Pancreas (tissue), 10 donors: ENCODE measurements at regions of chr11 and their contacts with region 1.

Region 1: GRCh38 chr11:12893787-12894672 is 115.1 kb upstream of the RASSF10 start:
- DNase-seq: peak; percentile 30 to 86 (median 72)
- ATAC-seq: peak; percentile 59 to 85 (median 80)
- H3K4me3 ChIP-seq: no peak overlapping the region
- H3K27ac ChIP-seq: peak overlapping the region in 2 of 4 donors; percentile 29 to 31
- H3K4me1 ChIP-seq: peaks cover 0 to 17% (median 3%) of the 10 kb centered on the region in 3 donors
- H3K27me3 ChIP-seq: no peaks in the 10 kb centered on the region
- CTCF ChIP-seq: peak; percentile 79 to 86 (median 82)

Region 2: DNA sequence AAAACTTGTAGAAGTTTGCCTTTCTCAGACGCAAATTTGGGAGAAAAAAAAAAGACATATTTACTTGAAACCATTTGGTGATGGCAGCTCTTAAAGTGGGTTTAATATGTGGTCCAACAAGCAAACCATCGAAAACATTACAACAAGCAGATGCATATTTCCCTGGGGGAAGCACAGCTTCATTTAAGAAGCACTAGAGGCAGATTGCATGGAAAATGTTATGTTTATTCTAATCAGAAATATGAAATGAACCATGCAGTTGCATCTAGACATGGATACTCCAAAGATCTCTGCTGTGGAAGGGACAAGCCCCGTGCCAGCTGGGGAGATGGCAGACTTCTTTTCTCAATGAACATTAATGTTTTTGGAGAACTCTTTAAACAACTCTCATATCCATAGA is 574.0 kb before region 1 on chr11:
- intact Hi-C with region 1: loop called in 2 of 3 experiments (anchors 5 to 10 kb)
- DNase-seq: no peak
- ATAC-seq: no peak
- H3K4me3 ChIP-seq: no peak overlapping the region
- H3K27ac ChIP-seq: no peak overlapping the region
- H3K4me1 ChIP-seq: no peaks in the 10 kb centered on the region
- H3K27me3 ChIP-seq: no peaks in the 10 kb centered on the region
- CTCF ChIP-seq: no peak

Region 3: DNA sequence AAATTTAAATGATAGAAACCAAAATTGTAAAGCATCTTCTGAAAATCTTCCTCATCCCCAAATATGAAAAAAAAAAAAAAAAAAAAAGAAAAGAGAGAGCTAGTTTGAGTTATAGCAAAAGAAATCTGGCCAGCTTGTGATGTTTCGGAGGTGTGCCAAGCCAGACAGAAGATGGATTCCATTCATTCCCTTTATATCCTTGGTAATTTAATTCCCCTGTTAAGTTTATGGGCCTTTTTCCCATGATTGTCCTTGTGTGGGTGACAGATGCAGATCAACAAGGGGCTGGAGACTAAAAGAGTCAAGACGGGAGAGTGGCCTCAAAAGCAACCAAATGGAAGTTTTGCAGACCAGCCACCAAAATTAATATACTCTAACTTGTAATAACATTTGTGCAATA is 564.2 kb before region 1 on chr11:
- intact Hi-C with region 1: loop called in 2 of 3 experiments (anchors 5 to 10 kb)
- DNase-seq: no peak
- ATAC-seq: no peak
- H3K4me3 ChIP-seq: no peak overlapping the region
- H3K27ac ChIP-seq: no peak overlapping the region
- H3K4me1 ChIP-seq: peaks cover 0 to 5% (median 3%) of the 10 kb centered on the region in 3 donors
- H3K27me3 ChIP-seq: no peaks in the 10 kb centered on the region
- CTCF ChIP-seq: no peak

Region 4: DNA sequence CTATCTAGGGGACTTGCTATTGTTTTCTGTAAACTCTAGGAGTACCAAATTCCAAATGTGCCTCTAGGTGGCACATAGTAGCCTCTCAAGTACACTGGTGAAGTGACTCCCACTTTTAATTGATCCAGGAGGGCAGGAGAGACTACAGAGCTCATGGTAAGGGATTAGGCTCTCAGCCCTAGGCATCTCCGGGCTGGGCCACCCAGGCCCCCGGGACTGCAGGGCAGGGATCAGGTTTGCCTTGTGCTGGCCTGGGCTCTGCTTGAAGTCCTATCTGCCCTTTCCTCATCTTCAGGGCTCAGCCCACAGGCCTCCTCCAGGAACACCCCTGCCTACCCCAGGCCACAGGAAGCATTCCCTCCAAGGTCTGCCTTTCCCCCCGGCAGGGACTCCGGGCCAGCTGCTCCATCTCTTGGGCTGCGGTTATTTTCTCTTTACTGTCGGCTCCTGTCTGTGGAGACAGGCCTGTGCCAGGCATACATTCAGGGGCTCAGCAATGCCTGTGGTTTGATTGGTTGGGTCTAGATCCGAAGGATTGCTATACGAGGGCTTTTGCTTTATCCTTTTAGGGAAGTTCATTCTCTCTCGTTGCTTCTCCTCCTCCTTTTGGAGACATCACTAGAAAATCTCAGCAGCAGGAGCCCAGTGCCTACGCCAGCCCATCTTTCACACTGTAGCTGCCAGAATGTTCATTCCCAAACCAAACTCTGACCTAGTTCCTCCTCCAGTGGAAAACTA is 483.9 kb before region 1 on chr11:
- intact Hi-C with region 1: loop called in 1 of 3 experiments (anchors 10 kb)
- DNase-seq: no peak
- ATAC-seq: peak in 2 of 4 donors; percentile 33 to 37
- H3K4me3 ChIP-seq: no peak overlapping the region
- H3K27ac ChIP-seq: no peak overlapping the region
- H3K4me1 ChIP-seq: peaks cover 4 to 11% (median 7%) of the 10 kb centered on the region in 3 donors
- H3K27me3 ChIP-seq: no peaks in the 10 kb centered on the region
- CTCF ChIP-seq: no peak

Region 5: DNA sequence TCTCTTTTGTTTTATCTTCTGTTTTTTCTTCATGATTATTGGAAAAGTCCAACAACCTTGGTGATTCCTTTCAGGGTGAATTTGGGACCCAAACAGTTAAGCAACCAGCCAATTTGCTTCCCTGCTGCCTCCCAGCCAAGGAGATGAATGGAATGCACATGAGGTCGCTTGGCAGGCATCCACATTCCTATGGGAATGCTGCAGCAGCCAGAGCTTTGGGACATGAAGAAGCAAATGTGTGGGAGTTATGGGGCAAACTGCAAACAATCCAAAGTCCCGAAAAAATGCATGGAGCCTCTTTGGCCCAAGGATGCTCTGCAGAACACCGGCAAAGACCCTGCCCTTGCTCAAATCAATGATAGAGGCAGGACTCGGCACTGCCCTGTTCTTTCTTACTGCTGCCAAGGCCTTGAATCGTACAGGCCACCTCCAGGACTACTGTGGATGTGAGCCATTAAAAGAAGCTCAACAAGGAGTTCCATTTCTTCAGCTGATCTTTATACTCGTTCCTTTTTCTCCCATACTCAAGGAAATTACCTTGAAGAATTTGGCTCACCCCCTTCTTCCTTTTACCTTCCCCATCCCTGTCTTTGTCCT is 337.1 kb before region 1 on chr11:
- intact Hi-C with region 1: no loop called
- DNase-seq: peak in 4 of 6 donors; percentile 44 to 68 (median 62)
- ATAC-seq: peak; percentile 65 to 90 (median 80)
- H3K4me3 ChIP-seq: no peak overlapping the region
- H3K27ac ChIP-seq: no peak overlapping the region
- H3K4me1 ChIP-seq: no peaks in the 10 kb centered on the region
- H3K27me3 ChIP-seq: no peaks in the 10 kb centered on the region
- CTCF ChIP-seq: no peak